ENCODE measurements at regions of chr11 and their contacts with region 1.

Region 1: DNA sequence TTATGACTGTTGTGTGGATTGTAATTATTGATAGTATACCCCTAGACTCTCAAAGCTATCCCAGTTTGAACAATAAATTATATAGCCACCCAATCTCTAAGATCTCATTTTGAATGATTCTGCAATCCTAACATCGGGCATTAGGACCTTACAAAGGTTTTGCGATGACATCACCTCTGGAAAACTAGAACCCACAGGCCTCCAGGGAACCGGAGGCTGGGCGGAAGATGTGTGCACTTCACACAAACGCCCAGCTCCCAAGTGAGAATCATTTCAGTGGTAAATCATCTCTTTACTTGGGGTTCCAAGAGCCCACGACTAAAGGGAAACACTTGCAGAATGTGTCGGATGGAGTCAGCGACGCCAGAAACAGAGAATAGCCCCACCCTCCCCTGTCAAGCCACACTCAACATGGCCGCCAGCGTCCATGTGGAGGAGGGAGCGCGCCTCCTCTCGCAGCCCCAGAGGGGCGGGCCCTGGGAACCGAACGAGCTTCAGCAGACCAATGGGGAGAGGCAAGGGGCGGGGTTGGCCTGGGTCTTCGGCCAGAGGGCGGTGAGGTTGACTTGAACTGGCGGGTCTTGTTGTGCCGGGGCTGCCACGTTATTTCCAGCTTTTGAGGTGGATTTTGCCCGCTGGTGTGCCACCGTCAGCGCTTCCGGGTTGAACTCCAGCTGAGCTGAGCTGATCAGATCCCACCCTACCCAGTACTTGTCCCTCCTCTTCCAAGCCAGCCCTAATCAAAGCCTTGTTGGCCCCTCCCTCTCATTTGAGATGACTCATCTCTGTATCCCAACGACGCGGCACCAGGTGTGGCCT is 8.4 kb upstream of the MRPL48 start:
- DNase-seq: peak; percentile 99
- H3K4me3 Mint-ChIP-seq: peak overlapping the region; percentile 81
- H3K27ac Mint-ChIP-seq: peak overlapping the region; percentile 99
- H3K4me1 Mint-ChIP-seq: peaks cover 23% of the 10 kb centered on the region
- H3K27me3 Mint-ChIP-seq: no peaks in the 10 kb centered on the region

Region 2: GRCh38 chr11:73766763-73767162 is 12.5 kb before region 1 on chr11:
- CTCF ChIA-PET with region 1: interaction called, 62 read pairs
- POLR2A ChIA-PET with region 1: interaction called, 158 read pairs
- DNase-seq: no peak
- H3K4me3 Mint-ChIP-seq: no peak overlapping the region
- H3K27ac Mint-ChIP-seq: no peak overlapping the region
- H3K4me1 Mint-ChIP-seq: peaks cover 2% of the 10 kb centered on the region
- H3K27me3 Mint-ChIP-seq: peaks cover 17% of the 10 kb centered on the region